Activated CD4-positive, alpha-beta memory T cell treated with anti-CD3 and anti-CD28 coated beads for 36 hours (primary cell): ENCODE measurements at regions of chr10 and their contacts with region 1.

Region 1: DNA sequence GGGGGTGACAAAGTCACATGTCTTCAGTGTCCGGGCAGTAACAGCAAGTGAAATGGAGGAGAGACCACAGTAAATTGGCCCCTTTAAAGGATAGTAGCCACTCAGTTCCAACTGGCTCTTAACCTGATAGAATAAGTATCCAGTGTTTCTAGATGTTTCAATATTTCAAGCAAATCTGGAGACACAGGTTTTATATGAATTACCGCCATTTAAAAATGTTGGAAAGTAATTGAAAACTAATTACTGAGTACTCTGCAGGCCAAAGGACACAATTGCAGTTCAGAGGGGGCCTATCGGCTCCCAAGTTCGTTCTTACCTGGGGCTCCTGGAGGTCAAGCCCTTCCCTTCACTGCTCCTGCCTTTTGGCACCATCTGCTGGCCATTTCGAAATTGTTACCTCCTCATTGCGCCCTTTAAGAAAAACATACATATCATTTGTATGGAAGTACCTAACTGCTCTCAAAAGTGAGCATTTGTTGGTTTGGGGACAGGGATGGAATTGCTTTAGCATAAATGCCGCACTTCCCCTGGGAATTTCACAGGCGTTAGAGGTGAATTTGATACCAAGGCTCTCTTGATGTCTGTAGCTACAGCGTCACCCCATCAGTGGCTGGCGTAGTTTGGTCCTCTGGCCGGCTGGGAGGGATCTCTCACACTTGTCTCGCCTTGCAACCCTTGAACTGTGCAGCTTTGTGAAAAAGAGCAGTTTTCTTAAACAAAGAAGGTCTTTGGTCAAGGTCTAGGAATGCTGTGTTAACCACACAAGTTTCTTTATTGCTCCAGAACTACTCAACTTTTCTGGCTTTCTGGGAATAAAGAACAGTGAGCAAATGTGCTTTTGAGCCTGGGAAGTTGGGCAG is 220.0 kb downstream of the ARHGAP21 start:
- DNase-seq: peak; percentile 56
- H3K4me3 Mint-ChIP-seq: no peak overlapping the region
- H3K27ac Mint-ChIP-seq: no peak overlapping the region
- H3K4me1 Mint-ChIP-seq: no peaks in the 10 kb centered on the region
- H3K27me3 Mint-ChIP-seq: peaks cover 11% of the 10 kb centered on the region

Region 2: DNA sequence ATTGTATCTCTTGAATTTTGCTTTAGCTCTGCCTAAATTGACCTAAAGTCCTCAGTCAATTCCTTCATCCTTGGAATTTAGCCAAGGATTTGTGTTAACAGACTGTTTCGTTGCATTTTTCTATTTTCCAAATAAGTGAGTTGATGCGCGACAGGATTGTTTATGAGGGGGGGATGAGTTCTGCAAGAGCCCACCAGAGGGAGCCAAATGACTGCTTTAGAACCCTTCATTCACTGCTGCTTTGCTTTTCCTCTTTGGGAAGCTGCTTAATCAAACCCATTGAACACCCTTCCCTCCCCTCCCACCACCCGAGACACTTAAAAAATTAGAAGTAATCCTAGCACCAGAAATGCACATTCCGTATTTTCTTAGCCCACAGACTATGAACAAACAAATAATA is 1345.3 kb before region 1 on chr10:
- CTCF ChIA-PET with region 1: no interaction called
- POLR2A ChIA-PET with region 1: no interaction called
- intact Hi-C with region 1: loop called (anchors 10 kb)
- DNase-seq: peak; percentile 44
- H3K4me3 Mint-ChIP-seq: no peak overlapping the region
- H3K27ac Mint-ChIP-seq: no peak overlapping the region
- H3K4me1 Mint-ChIP-seq: peaks cover 2% of the 10 kb centered on the region
- H3K27me3 Mint-ChIP-seq: peaks cover 23% of the 10 kb centered on the region

Region 3: DNA sequence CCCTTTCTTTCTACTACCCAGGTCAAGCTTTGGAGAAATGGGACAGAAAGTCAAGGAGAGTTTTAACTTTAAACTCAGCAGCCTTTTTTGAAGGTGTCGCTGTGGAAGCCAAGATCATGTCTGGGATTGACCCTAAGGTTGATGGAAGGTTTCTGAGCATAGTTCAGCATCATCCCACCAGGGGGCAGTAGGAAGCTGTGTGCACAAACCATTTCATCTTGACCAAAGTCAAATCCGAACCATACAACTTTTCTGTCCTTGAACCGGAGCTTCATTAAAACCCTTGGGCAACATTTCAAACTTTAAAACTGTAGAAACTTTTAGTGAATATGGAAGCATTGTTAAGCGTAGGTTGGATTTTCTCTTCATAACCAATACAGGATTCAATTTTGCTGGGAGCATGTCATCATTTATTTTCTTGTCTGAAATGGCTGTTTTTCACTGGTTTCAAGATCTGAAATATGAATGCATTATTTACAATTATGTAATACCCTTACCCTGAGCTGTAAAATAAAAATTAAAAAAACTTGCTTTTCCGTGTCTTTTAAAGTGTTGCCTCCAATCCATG is 509.1 kb before region 1 on chr10:
- CTCF ChIA-PET with region 1: interaction called, 12 read pairs
- POLR2A ChIA-PET with region 1: no interaction called
- intact Hi-C with region 1: loop called (anchors 1 kb)
- DNase-seq: peak; percentile 43
- H3K4me3 Mint-ChIP-seq: no peak overlapping the region
- H3K27ac Mint-ChIP-seq: no peak overlapping the region
- H3K4me1 Mint-ChIP-seq: no peaks in the 10 kb centered on the region
- H3K27me3 Mint-ChIP-seq: peaks cover 4% of the 10 kb centered on the region

Region 4: GRCh38 chr10:24360282-24361127 is 143.2 kb before region 1 on chr10:
- CTCF ChIA-PET with region 1: interaction called, 6 read pairs
- POLR2A ChIA-PET with region 1: no interaction called
- intact Hi-C with region 1: loop called (anchors 1 kb)
- DNase-seq: peak; percentile 61
- H3K4me3 Mint-ChIP-seq: no peak overlapping the region
- H3K27ac Mint-ChIP-seq: no peak overlapping the region
- H3K4me1 Mint-ChIP-seq: no peaks in the 10 kb centered on the region
- H3K27me3 Mint-ChIP-seq: peaks cover 5% of the 10 kb centered on the region

Region 5: GRCh38 chr10:24383681-24384106 is 120.0 kb before region 1 on chr10:
- CTCF ChIA-PET with region 1: no interaction called
- POLR2A ChIA-PET with region 1: no interaction called
- intact Hi-C with region 1: loop called (anchors 5 kb)
- DNase-seq: peak; percentile 78
- H3K4me3 Mint-ChIP-seq: peak overlapping the region; percentile 12
- H3K27ac Mint-ChIP-seq: peak overlapping the region; percentile 74
- H3K4me1 Mint-ChIP-seq: peaks cover 13% of the 10 kb centered on the region
- H3K27me3 Mint-ChIP-seq: peaks cover 23% of the 10 kb centered on the region

Region 6: GRCh38 chr10:24518981-24519597 is 15.4 kb after region 1 on chr10:
- CTCF ChIA-PET with region 1: interaction called, 45 read pairs
- POLR2A ChIA-PET with region 1: no interaction called
- intact Hi-C with region 1: no loop called
- DNase-seq: peak; percentile 46
- H3K4me3 Mint-ChIP-seq: no peak overlapping the region
- H3K27ac Mint-ChIP-seq: no peak overlapping the region
- H3K4me1 Mint-ChIP-seq: peaks cover 11% of the 10 kb centered on the region
- H3K27me3 Mint-ChIP-seq: peaks cover 7% of the 10 kb centered on the region

Region 7: DNA sequence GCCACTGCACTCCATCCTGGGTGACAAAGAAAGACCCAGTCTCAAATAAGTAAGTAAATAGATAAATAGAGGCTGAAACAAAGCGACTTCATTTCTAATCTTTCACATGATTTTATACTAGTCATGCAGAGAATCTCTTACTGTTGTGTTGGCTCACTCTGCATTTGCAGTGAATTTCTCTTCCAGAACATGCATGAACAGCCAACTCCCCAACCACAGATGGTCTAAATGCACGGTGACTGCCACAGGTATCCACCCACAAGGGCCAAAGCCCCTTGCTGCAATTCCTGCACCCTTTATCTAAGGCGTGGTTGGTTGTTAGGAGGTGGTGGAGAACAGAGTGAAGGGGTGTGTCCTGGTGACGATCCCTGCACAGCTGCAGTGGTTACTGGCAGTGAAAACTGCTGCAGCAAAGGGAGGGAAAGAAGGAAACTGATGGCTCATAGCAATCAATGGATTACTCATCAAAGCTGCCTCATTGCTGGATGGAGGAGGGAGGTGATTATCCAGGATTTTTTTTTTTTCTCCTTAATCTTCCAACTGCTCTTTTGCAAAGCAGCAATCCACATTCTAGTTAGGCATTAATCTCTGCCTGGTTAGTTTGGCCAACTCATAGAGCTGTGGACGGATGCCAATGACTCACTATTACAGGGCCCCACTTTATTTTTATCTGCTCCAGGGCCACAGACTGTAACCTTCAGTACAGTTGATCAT is 398.2 kb after region 1 on chr10:
- CTCF ChIA-PET with region 1: no interaction called
- POLR2A ChIA-PET with region 1: no interaction called
- intact Hi-C with region 1: no loop called
- DNase-seq: peak; percentile 47
- H3K4me3 Mint-ChIP-seq: no peak overlapping the region
- H3K27ac Mint-ChIP-seq: peak overlapping the region; percentile 25
- H3K4me1 Mint-ChIP-seq: peaks cover 47% of the 10 kb centered on the region
- H3K27me3 Mint-ChIP-seq: no peaks in the 10 kb centered on the region